ENCODE measurements at regions of chr3 and their contacts with region 1.

Region 1: GRCh38 chr3:32961189-32961715 is 9.8 kb downstream of the CCR4 start:
- DNase-seq: no peak
- H3K4me3 ChIP-seq: no peak overlapping the region
- H3K27ac ChIP-seq: no peak overlapping the region
- H3K27me3 ChIP-seq: peaks cover 5% of the 10 kb centered on the region
- CTCF ChIP-seq: no peak

Region 2: DNA sequence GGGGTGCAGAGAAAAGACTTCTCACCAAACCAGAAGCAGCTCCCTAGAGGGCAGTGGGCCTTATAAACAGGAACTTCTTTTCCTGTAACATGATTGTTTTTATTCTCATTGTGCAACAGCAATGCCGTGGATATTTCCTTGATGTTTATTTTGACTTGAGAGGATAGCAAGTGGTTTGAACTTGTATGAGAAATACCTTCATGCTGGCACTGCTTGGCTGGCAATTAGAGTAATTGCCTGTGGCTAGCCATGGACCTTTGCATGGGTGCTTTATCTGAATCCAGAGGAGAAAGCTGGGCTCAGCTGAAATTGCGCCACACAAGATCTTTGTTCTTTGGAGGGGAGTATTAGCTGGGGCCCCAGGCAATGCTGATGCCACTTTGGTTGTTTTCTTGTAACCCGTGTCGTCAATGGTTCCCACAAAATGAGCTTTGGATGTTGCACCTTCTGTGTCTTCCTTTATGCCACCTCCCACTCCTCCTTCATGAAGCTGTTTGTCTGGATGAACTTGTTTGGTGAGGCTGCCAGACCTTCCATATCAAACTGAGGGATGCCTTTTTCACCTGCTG is 684.9 kb before region 1 on chr3:
- CTCF ChIA-PET with region 1: no interaction called
- POLR2A ChIA-PET with region 1: no interaction called
- DNase-seq: no peak
- H3K4me3 ChIP-seq: no peak overlapping the region
- H3K27ac ChIP-seq: no peak overlapping the region
- H3K27me3 ChIP-seq: no peaks in the 10 kb centered on the region
- CTCF ChIP-seq: no peak

Region 3: GRCh38 chr3:32797776-32798175 is 163.5 kb before region 1 on chr3:
- CTCF ChIA-PET with region 1: no interaction called
- POLR2A ChIA-PET with region 1: no interaction called
- DNase-seq: no peak
- H3K4me3 ChIP-seq: no peak overlapping the region
- H3K27ac ChIP-seq: no peak overlapping the region
- H3K27me3 ChIP-seq: peaks cover 2% of the 10 kb centered on the region
- CTCF ChIP-seq: no peak

Region 4: DNA sequence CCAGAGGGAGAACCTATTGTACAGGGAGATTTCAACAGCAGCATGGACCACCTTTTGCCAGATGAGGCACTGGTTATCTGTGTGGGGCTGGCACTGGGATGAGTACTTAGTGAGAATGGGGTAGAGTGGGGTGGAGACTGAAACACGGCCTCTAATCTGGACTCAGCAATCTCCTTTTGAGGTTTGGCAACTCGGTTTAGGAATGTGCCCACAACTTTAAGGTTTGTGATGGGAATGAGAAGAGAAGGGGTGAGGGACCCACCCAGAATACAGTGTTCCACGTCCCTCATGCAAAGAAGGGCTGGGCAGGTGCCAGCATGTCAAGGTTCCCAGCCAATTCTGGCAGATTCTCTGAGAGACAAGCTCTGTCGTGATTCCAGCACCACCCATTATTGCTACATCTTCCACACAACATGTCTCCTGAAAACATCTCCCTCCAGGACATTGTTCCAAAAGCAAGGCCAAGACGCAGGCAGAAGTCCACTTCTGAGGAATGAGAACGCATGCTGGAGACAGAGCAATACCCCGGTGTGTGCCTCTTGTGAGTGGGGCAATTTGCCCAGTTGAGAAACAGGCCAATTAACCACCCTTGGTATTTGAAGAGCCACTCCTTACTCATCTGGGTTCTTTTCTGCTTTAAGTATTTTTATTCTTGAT is 47.3 kb before region 1 on chr3:
- CTCF ChIA-PET with region 1: no interaction called
- POLR2A ChIA-PET with region 1: no interaction called
- DNase-seq: no peak
- H3K4me3 ChIP-seq: no peak overlapping the region
- H3K27ac ChIP-seq: no peak overlapping the region
- H3K27me3 ChIP-seq: peaks cover 4% of the 10 kb centered on the region
- CTCF ChIP-seq: no peak

Region 5: DNA sequence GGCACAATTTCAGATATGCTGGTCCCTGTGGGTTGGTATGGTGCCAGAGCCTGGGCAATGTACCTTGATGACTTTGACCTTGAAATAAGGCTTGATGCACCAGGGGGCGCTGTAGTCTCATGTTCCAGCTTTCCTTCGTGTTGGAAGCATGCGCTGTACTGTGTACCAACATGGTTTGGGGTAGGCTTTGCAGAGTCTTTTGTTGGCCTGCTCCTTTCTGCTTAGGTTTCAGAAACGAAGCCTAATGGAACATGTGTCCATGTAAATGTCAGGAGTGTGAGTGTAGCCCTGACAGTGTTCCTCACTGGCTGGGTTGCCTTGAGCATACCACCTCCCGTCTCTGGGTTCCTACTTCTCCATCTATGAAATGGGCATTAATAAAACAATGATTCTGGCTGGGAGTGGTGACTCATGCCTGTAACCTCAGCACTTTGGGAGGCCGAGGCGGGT is 13.4 kb before region 1 on chr3:
- CTCF ChIA-PET with region 1: interaction called, 10 read pairs
- POLR2A ChIA-PET with region 1: no interaction called
- DNase-seq: peak; percentile 51
- H3K4me3 ChIP-seq: no peak overlapping the region
- H3K27ac ChIP-seq: no peak overlapping the region
- H3K27me3 ChIP-seq: peaks cover 9% of the 10 kb centered on the region
- CTCF ChIP-seq: peak; percentile 84